Thyroid gland (tissue), 4 donors: ENCODE measurements at regions of chr1 and their contacts with region 1.

Region 1: GRCh38 chr1:19651141-19651737 is 7.1 kb downstream of the NBL1 start:
- DNase-seq: peak; percentile 58 to 72
- H3K4me3 ChIP-seq: no peak overlapping the region
- H3K27ac ChIP-seq: peak overlapping the region in 2 of 3 donors; percentile 47 to 53
- H3K4me1 ChIP-seq: peaks cover 10 to 45% of the 10 kb centered on the region in 2 donors
- H3K27me3 ChIP-seq: no peaks in the 10 kb centered on the region
- CTCF ChIP-seq: peak in 5 of 6 experiments; percentile 23 to 90 (median 75)
- POLR2A ChIP-seq: no peak

Region 2: GRCh38 chr1:19251305-19252196 is 399.7 kb before region 1 on chr1 and contains the starts of genes EMC1 and MRTO4:
- intact Hi-C with region 1: loop called (anchors 10 kb)
- DNase-seq: peak; percentile 81 to 84
- H3K4me3 ChIP-seq: peak within 1 kb of the TSS; percentile 78 to 99 (median 82)
- H3K27ac ChIP-seq: peak within 1 kb of the TSS; percentile 88 to 98 (median 94)
- H3K4me1 ChIP-seq: peaks cover 18 to 21% of the 10 kb centered on the region in 2 donors
- H3K27me3 ChIP-seq: no peaks in the 10 kb centered on the region
- CTCF ChIP-seq: peak in 1 of 6 experiments; percentile 21
- POLR2A ChIP-seq: peak in 1 of 2 donors; percentile 40
- total RNA-seq, gene EMC1: 32.8 to 54.1 (median 43.0) TPM
- total RNA-seq, gene MRTO4: 16.0 to 19.5 (median 17.5) TPM

Region 3: GRCh38 chr1:19341201-19342072 is 309.8 kb before region 1 on chr1:
- intact Hi-C with region 1: loop called (anchors 2 kb)
- DNase-seq: peak; percentile 71 to 79
- H3K4me3 ChIP-seq: no peak overlapping the region
- H3K27ac ChIP-seq: no peak overlapping the region
- H3K4me1 ChIP-seq: peaks cover 0 to 6% of the 10 kb centered on the region in 2 donors
- H3K27me3 ChIP-seq: no peaks in the 10 kb centered on the region
- CTCF ChIP-seq: peak; percentile 67 to 93 (median 80)
- POLR2A ChIP-seq: no peak

Region 4: DNA sequence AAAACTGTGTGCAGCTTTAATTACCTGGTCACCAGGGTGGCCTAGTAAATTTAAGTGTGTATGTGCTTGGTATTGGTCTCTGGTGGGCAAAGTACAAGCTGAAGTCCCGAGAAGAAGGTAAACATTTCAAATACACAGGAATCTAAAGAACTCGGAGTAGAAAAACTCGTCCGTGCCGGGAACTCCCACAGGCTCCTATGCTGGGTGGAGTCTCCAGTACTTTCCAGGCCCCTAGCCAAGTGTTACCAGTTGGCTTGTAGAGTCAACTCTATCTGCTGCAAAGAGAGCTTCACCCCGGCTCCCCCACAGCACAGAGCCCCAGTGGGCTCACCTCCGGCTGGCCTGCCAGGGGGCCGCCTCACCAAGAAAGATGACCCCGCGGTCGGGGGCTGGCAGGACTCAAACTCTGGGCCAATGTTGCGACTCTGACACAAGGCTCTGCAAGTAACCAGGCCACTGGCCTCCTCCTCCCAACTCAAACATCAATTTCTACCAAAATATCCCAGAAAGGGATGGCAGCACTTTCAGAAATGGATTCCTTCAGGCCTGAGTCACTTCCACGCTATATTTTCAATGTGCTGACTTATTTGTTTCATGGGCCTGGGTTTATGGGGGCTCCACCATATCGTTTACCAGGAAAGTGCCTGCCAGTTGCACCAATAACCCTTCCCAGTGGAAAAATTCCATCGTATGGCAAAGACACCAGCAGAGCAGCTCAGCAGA is 265.2 kb before region 1 on chr1:
- intact Hi-C with region 1: loop called (anchors 5 kb)
- DNase-seq: peak; percentile 77 to 79
- H3K4me3 ChIP-seq: no peak overlapping the region
- H3K27ac ChIP-seq: peak overlapping the region; percentile 18 to 79 (median 54)
- H3K4me1 ChIP-seq: peaks cover 25 to 37% of the 10 kb centered on the region in 2 donors
- H3K27me3 ChIP-seq: no peaks in the 10 kb centered on the region
- CTCF ChIP-seq: no peak
- POLR2A ChIP-seq: no peak

Region 5: DNA sequence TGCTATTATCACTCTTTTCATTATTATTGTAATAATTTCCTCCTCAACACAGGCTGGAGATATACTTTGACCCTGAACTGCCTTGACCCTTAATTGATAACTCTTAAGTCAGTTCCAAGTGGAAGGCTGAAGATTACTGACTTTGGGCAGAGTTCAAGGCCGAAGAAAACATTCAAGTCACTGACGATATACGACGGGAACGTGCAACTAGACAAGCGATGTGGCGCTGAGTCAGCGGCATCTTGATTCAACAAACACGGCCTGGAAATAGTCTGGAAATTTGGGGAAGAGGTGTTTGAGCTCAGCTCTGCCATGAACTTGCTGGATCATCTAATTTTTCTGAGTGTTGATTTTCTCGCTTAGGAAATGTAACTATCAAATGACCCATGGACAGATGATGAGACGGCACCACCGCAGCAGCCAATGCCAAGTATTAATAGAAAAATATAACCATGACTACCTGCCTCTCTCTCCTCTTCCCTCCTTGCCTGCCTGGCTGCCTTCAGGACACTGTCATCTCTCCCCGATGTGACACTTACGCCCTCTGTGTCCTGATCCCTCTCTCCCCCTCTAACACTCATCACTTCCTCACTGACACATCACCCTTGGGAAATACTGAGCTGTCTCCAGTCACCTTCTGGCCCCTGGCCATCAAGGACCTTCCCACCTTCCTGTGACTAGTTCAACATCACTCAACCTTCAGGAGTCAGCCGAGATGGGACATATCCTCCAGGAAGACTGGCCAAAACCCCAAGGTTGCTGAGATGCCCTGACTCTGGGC is 99.1 kb after region 1 on chr1:
- intact Hi-C with region 1: no loop called
- DNase-seq: no peak
- H3K4me3 ChIP-seq: no peak overlapping the region
- H3K27ac ChIP-seq: no peak overlapping the region
- H3K4me1 ChIP-seq: no peaks in the 10 kb centered on the region
- H3K27me3 ChIP-seq: no peaks in the 10 kb centered on the region
- CTCF ChIP-seq: no peak
- POLR2A ChIP-seq: no peak